Endothelial cell of umbilical vein (primary cell): ENCODE measurements at regions of chr5 and their contacts with region 1.

Region 1: DNA sequence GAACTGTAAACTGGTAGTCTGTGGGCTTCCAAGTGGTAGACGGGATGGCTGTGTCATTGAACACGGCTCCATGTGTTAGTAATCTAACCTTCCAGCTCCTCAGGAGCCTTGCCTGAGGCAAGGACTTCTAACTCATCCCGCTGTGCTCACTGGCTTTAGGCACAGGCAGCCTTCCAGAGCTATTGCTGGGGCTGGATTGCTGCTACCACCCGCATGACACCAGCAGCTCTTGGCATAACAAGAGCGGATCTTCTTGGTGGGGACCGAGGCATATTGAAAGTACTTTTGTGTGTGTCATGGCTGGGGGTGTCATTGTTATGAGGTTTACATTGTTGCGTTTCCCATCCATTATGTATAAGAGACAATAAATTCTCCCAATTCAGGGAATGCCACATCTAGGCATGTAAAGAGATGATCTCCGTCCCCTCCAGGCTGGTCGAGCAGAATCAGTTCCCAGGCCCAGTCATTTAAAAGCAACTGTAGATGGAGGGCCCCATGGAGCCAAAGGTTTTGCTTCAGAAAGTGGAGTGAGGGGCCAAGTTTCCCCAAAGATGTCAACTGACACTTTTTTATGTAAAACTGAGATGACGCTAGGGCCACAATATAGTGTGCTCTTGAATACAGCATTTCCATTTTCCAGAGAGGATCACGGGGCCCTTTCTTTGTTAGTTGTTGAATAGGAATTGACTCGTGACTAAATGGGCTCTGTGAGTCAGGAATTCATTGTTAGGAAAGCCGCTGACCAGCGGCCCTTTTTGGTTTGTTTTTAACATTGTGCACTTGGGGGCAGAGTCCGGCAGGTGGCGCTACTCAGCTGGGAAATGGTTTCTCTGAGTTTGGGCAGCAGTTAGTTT is 759.6 kb downstream of the TAF11L14 start:
- DNase-seq: peak; percentile 40
- H3K4me3 ChIP-seq: no peak overlapping the region
- H3K27ac ChIP-seq: no peak overlapping the region
- H3K4me1 ChIP-seq: no peaks in the 10 kb centered on the region
- H3K27me3 ChIP-seq: no peaks in the 10 kb centered on the region
- CTCF ChIP-seq: peak; percentile 70 to 77
- POLR2A ChIP-seq: no peak

Region 2: DNA sequence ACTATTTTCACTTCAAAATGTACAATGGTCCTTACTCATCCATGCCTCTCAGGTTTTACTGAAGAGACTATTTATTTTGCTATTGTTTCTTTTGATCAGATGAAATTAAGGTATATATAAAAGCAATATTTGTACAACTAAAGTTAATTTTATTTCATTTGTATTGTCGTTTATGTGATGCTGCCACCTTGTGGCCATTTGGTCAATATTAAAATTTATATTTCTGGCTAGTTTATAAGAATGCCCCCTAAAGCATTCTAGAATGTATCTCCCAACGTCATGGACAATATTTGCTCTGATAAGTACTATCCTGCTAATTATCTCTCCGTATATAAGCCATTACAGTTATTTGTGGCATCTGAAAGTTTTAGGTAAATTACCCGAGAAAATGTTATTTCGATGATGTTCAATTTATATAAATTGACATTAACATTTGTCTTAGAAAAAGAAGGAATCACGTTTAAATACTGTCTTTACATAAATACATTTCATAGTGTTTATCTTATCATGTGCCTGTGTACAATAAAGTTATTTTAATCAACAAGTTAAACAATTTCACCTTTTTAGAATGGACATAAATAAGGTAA is 79.5 kb before region 1 on chr5:
- CTCF ChIA-PET with region 1: no interaction called
- POLR2A ChIA-PET with region 1: no interaction called
- dilution Hi-C with region 1: no loop called
- intact Hi-C with region 1: no loop called
- DNase-seq: peak; percentile 32
- H3K4me3 ChIP-seq: no peak overlapping the region
- H3K27ac ChIP-seq: no peak overlapping the region
- H3K4me1 ChIP-seq: no peaks in the 10 kb centered on the region
- H3K27me3 ChIP-seq: no peaks in the 10 kb centered on the region
- CTCF ChIP-seq: peak in 1 of 2 donors; percentile 19
- POLR2A ChIP-seq: no peak

Region 3: DNA sequence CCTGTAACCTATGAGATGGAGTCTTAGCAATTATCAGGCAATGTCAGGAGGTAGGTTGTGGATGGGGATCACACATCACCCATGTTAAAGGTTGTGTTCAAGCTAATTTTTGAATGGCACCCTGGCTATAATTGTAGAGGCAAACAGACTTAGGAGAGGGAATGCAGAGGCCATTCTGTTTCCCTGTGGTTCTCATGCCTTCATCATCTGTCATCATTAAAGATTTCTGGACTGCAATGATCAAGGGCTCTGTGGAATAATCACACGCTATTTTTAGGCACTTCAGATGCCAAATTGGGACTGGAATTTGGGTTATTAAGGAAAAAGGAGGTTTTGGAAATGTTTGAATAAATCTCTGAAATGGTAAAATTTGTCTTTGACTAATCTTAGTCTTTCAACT is 305.9 kb after region 1 on chr5:
- CTCF ChIA-PET with region 1: interaction called, 3 read pairs
- POLR2A ChIA-PET with region 1: no interaction called
- dilution Hi-C with region 1: no loop called
- intact Hi-C with region 1: loop called (anchors 1 kb)
- DNase-seq: no peak
- H3K4me3 ChIP-seq: no peak overlapping the region
- H3K27ac ChIP-seq: no peak overlapping the region
- H3K4me1 ChIP-seq: no peaks in the 10 kb centered on the region
- H3K27me3 ChIP-seq: no peaks in the 10 kb centered on the region
- CTCF ChIP-seq: no peak
- POLR2A ChIP-seq: no peak

Region 4: GRCh38 chr5:19608444-19609002 is 1214.7 kb after region 1 on chr5:
- CTCF ChIA-PET with region 1: interaction called, 6 read pairs
- POLR2A ChIA-PET with region 1: no interaction called
- dilution Hi-C with region 1: no loop called
- intact Hi-C with region 1: loop called (anchors 10 kb)
- DNase-seq: no peak
- H3K4me3 ChIP-seq: no peak overlapping the region
- H3K27ac ChIP-seq: no peak overlapping the region
- H3K4me1 ChIP-seq: no peaks in the 10 kb centered on the region
- H3K27me3 ChIP-seq: no peaks in the 10 kb centered on the region
- CTCF ChIP-seq: no peak
- POLR2A ChIP-seq: no peak